Activated CD4-positive, alpha-beta T cell treated with anti-CD3 and anti-CD28 coated beads for 36 hours (primary cell): ENCODE measurements at regions of chr1 and their contacts with region 1.

Region 1: DNA sequence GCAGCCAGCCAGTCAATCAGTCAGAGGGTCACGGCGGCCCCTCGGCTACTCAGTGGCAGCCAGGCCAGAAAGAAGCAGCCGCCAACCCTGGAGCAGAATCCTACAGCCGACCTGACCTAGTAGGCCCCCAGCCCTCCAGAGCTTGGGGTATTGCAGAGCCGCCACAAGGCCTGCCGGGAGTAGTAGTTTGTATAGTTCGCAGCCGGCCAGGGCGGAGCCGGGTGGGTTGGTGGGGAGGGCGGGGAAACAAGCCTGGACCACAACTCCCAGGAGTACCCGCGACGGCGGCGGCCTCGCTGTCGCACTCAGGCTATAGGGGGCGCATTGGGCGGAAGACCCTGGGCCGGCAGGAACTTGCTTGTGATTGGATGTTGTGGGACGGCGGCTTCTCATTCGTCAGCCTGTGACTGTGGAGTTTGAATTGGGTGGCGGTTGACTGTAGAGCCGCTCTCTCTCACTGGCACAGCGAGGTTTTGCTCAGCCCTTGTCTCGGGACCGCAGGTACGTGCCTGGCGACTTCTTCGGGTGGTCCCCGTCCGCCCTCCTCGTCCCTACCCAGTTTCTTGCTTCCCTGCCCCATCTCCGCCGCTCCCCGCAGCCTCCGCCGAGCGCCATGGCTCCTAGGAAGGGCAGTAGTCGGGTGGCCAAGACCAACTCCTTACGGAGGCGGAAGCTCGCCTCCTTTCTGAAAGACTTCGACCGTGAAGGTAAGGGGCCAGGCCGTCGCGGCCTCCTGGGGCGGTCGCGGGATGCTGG is at the start of gene CDCA8:
- DNase-seq: peak; percentile 99
- ATAC-seq: peak; percentile 88
- H3K4me3 Mint-ChIP-seq: peak within 1 kb of the TSS; percentile 97
- H3K27ac Mint-ChIP-seq: peak within 1 kb of the TSS; percentile 92
- H3K4me1 Mint-ChIP-seq: peaks cover 32% of the 10 kb centered on the region
- H3K27me3 Mint-ChIP-seq: no peaks in the 10 kb centered on the region
- total RNA-seq, gene CDCA8: 61.2 to 61.7 TPM

Region 2: DNA sequence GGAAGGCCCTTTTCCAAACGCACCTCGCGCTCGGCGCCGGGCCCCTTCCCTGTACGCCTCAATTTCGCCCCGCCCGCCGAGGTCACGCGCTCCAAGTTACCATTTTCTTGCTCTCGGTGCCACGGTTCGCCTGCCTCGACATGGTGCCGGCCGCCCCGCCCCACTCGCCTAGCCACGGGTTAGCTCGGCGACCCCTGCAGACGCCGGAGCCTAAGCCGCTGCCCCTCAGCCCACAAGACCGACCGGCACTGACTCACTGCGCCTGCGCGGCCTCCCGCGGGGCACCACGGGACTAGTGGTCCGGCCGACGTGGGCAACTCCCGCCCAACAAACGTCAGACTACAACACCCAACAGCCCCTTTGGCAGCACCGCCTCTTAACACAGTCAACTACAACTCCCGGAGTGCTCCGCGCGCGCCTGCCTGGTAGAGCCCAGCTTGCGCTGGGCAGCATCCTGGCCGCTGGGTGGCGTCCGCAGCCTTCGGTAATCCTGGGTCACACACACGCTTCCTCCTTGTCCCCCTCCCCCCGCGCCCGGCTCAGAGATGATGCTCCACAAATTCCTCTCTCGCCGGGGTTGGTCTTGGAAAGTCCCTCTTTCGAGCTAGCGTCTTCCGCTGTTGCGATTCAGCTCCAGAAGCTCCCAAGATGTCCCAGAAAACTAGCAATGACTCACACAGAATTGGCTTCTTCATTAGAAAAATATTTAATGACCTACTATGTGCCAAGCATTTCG is 1542.9 kb before region 1 on chr1 and contains the start of gene TRAPPC3:
- CTCF ChIA-PET with region 1: no interaction called
- POLR2A ChIA-PET with region 1: no interaction called
- intact Hi-C with region 1: loop called in 1 of 2 experiments (anchors 5 kb)
- DNase-seq: peak; percentile 100
- ATAC-seq: peak; percentile 93
- H3K4me3 Mint-ChIP-seq: peak within 1 kb of the TSS; percentile 95
- H3K27ac Mint-ChIP-seq: peak within 1 kb of the TSS; percentile 94
- H3K4me1 Mint-ChIP-seq: peaks cover 67% of the 10 kb centered on the region
- H3K27me3 Mint-ChIP-seq: no peaks in the 10 kb centered on the region
- total RNA-seq, gene TRAPPC3: 43.8 to 53.8 TPM

Region 3: DNA sequence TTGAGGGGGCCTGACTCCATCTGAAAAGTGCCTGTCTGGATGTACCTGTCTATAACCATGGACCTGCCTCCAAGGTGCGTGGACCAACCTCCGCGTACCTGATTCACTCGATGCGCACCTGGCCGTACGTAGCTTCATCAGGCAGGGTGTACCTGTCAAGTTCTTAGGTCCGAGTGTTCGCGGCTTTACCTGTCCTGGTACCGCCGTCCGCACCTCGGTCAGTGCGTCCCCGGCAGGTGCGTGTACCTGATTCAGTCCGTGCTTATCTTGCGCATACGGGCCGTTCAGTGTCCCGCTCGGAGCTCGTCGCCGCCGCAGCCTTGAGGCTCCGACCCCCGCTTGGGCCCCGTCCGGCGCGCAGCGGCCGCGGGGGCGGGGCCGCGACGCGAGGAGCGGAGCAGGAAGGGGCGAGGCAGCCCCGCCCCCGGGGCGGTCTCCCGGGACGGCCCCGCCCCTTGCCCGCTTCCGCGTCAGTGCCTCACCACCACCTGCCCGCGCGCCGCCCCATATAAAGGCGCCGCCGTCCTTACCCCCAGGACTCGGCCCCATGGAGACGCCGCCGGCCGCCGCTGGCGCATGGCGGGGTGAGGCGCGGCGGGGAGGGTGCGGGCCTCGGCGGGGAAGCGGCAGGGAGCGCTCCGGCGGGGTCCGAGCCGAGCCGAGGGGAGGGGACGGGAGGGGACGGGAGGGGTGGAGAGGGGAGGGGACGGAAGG is 218.1 kb before region 1 on chr1 and contains the start of gene ZC3H12A:
- CTCF ChIA-PET with region 1: interaction called, 3 read pairs
- POLR2A ChIA-PET with region 1: interaction called, 7 read pairs
- intact Hi-C with region 1: loop called (anchors 1 to 5 kb)
- DNase-seq: peak; percentile 96
- ATAC-seq: peak; percentile 46
- H3K4me3 Mint-ChIP-seq: peak within 1 kb of the TSS; percentile 95
- H3K27ac Mint-ChIP-seq: peak within 1 kb of the TSS; percentile 98
- H3K4me1 Mint-ChIP-seq: peaks cover 42% of the 10 kb centered on the region
- H3K27me3 Mint-ChIP-seq: no peaks in the 10 kb centered on the region
- total RNA-seq, gene ZC3H12A: 29.7 to 31.2 TPM

Region 4: DNA sequence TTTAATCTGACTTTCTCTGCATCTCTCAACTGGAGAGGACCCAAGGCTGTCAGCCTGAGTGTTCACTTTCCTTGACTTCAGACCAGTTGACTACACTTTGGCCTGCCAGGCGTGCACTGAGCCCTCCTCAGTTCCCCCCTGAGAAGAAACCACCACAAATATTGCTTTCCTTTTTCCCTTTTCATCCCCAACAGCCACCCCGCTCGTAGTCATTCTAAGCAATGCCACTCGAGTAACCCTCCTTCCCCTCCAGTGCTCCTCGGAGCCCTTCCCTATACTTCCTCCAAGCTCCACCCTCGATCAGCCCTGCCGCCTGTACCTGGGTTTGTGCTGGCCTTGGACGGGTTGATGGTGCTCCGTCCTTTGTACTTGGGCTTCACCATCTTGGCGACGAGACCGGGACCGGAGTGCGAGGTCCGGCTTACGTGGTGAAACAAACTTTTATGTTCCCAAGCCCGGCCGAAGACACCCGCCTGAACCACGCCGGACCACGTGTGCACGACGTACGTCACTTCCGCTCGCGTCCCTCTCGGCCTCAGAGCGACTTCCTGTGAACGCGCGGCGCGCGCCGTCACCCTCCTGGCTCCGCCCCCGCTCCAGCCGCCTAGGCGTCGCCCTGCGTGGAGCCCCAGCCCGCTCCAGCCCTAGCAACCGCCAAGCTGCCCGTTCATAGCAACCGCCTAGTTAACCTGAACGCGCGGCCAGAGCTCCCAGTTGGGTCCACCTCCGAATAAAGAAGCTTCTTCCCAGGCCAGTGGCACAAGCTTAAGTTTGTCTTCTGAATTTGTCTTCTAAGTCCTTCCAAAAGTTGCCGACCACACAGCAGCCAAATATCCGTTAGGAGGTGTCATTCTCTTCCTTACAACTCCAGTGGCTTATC is 96.6 kb before region 1 on chr1 and contains the start of gene GNL2:
- CTCF ChIA-PET with region 1: interaction called, 3 read pairs
- POLR2A ChIA-PET with region 1: interaction called, 3 read pairs
- intact Hi-C with region 1: loop called (anchors 1 kb)
- DNase-seq: peak; percentile 99
- ATAC-seq: peak; percentile 98
- H3K4me3 Mint-ChIP-seq: peak within 1 kb of the TSS; percentile 98
- H3K27ac Mint-ChIP-seq: peak within 1 kb of the TSS; percentile 92
- H3K4me1 Mint-ChIP-seq: peaks cover 37% of the 10 kb centered on the region
- H3K27me3 Mint-ChIP-seq: no peaks in the 10 kb centered on the region
- total RNA-seq, gene GNL2: 82.3 to 98.8 TPM

Region 5: DNA sequence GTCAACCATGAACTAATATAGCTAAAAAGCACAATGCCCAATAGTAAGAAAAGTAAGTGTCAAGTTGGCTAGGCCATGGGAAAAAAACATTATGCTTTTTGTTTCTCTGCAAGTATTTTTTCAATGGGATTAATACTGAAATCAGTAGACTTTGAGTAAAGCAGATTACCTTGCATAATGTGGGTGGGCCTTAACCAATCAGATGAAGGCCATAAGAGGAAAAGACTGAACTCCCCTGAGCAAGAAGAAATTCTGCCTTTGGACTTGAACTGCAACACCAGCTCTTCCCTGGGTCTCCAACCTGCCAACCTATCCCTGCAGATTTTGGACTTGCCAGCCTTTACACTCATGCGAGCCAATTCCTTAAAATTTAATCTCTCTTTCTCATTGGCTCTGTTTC is 51.2 kb before region 1 on chr1:
- CTCF ChIA-PET with region 1: no interaction called
- POLR2A ChIA-PET with region 1: no interaction called
- intact Hi-C with region 1: no loop called
- DNase-seq: no peak
- ATAC-seq: no peak
- H3K4me3 Mint-ChIP-seq: no peak overlapping the region
- H3K27ac Mint-ChIP-seq: no peak overlapping the region
- H3K4me1 Mint-ChIP-seq: no peaks in the 10 kb centered on the region
- H3K27me3 Mint-ChIP-seq: peaks cover 20% of the 10 kb centered on the region

Region 6: GRCh38 chr1:37714689-37715088 is 22.4 kb after region 1 on chr1:
- CTCF ChIA-PET with region 1: no interaction called
- POLR2A ChIA-PET with region 1: no interaction called
- intact Hi-C with region 1: no loop called
- DNase-seq: no peak
- ATAC-seq: no peak
- H3K4me3 Mint-ChIP-seq: no peak overlapping the region
- H3K27ac Mint-ChIP-seq: no peak overlapping the region
- H3K4me1 Mint-ChIP-seq: no peaks in the 10 kb centered on the region
- H3K27me3 Mint-ChIP-seq: no peaks in the 10 kb centered on the region

Region 7: GRCh38 chr1:37859507-37860345 is 167.5 kb after region 1 on chr1 and contains the start of gene MTF1:
- CTCF ChIA-PET with region 1: interaction called, 5 read pairs
- POLR2A ChIA-PET with region 1: interaction called, 10 read pairs
- intact Hi-C with region 1: loop called (anchors 1 kb)
- DNase-seq: peak; percentile 98
- ATAC-seq: peak; percentile 98
- H3K4me3 Mint-ChIP-seq: peak within 1 kb of the TSS; percentile 87
- H3K27ac Mint-ChIP-seq: peak within 1 kb of the TSS; percentile 93
- H3K4me1 Mint-ChIP-seq: peaks cover 40% of the 10 kb centered on the region
- H3K27me3 Mint-ChIP-seq: no peaks in the 10 kb centered on the region
- total RNA-seq, gene MTF1: 16.1 to 23.8 TPM

Region 8: GRCh38 chr1:38012363-38013226 is 320.3 kb after region 1 on chr1 and contains the start of gene UTP11:
- CTCF ChIA-PET with region 1: no interaction called
- POLR2A ChIA-PET with region 1: no interaction called
- intact Hi-C with region 1: loop called (anchors 1 to 5 kb)
- DNase-seq: peak; percentile 94
- ATAC-seq: peak; percentile 81
- H3K4me3 Mint-ChIP-seq: peak within 1 kb of the TSS; percentile 97
- H3K27ac Mint-ChIP-seq: peak within 1 kb of the TSS; percentile 95
- H3K4me1 Mint-ChIP-seq: peaks cover 51% of the 10 kb centered on the region
- H3K27me3 Mint-ChIP-seq: no peaks in the 10 kb centered on the region
- total RNA-seq, gene UTP11: 68.9 to 82.4 TPM

Region 9: DNA sequence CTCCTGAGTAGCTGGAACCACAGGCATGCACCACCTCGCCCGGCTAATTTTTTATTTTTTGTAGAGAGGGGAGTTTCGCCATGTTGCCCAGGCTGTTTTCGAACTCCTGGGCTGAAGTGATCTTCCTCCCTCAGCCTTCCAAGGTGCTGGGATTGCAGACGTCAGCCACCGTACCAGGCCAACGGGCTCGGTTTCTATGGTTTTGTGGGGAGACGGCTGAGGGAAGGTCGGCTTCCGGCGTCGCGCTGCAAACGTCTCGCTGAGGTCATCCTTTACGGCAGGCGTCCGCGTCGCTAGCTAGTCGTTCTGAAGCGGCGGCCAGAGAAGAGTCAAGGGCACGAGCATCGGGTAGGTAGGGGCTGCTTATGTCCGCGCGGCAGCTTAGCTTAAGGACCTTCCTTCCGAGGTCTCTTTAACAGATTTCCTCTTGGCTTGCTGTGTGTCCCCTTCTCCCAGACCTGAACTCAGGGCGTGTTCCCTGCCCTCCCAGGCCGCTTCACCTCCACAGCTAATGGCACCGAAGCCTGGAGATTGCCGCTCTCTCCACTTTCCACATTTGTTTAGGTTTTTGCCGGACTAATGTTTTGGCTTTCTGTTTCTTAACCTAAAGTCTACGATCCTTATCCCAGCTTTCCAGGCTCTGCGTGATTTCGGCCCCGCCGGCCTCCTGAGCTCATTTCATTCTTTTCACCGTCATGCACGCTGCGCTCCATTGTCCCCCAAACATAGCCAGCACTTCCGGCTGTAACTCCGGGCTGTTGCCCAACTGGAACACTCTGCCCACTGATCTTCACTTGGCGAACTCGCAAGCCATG is 1334.0 kb after region 1 on chr1 and contains the start of gene NDUFS5:
- CTCF ChIA-PET with region 1: interaction called, 3 read pairs
- POLR2A ChIA-PET with region 1: no interaction called
- intact Hi-C with region 1: loop called in 1 of 2 experiments (anchors 5 kb)
- DNase-seq: peak; percentile 93
- ATAC-seq: peak; percentile 90
- H3K4me3 Mint-ChIP-seq: peak within 1 kb of the TSS; percentile 87
- H3K27ac Mint-ChIP-seq: peak within 1 kb of the TSS; percentile 99
- H3K4me1 Mint-ChIP-seq: peaks cover 30% of the 10 kb centered on the region
- H3K27me3 Mint-ChIP-seq: no peaks in the 10 kb centered on the region
- total RNA-seq, gene NDUFS5: 150 to 220 TPM